Ascending aorta (tissue), 2 donors: ENCODE measurements at regions of chr11 and their contacts with region 1.

Region 1: GRCh38 chr11:75547580-75548058 is 14.4 kb upstream of the SERPINH1 start:
- DNase-seq: peak in 1 of 2 donors; percentile 86
- H3K4me3 ChIP-seq: no peak overlapping the region
- H3K27ac ChIP-seq: no peak overlapping the region
- H3K4me1 ChIP-seq: peaks cover 0 to 6% of the 10 kb centered on the region in 2 donors
- H3K27me3 ChIP-seq: no peaks in the 10 kb centered on the region
- CTCF ChIP-seq: peak; percentile 85 to 92 (median 91)

Region 2: GRCh38 chr11:75562048-75562835 is 14.6 kb after region 1 on chr11 and contains the start of gene SERPINH1:
- intact Hi-C with region 1: loop called (anchors 1 kb)
- DNase-seq: peak; percentile 66 to 94
- H3K4me3 ChIP-seq: peak within 1 kb of the TSS; percentile 80 to 93
- H3K27ac ChIP-seq: peak within 1 kb of the TSS; percentile 99 to 100
- H3K4me1 ChIP-seq: peaks cover 31 to 71% of the 10 kb centered on the region in 2 donors
- H3K27me3 ChIP-seq: no peaks in the 10 kb centered on the region
- CTCF ChIP-seq: no peak
- total RNA-seq, gene SERPINH1: 1,290 TPM

Region 3: GRCh38 chr11:75574698-75575602 is 27.3 kb after region 1 on chr11:
- intact Hi-C with region 1: loop called (anchors 1 kb)
- DNase-seq: no peak
- H3K4me3 ChIP-seq: no peak overlapping the region
- H3K27ac ChIP-seq: peak overlapping the region in 1 of 2 donors; percentile 24
- H3K4me1 ChIP-seq: peaks cover 0 to 3% of the 10 kb centered on the region in 2 donors
- H3K27me3 ChIP-seq: no peaks in the 10 kb centered on the region
- CTCF ChIP-seq: peak in 2 of 3 experiments; percentile 18 to 32

Region 4: GRCh38 chr11:75667831-75668450 is 120.3 kb after region 1 on chr11:
- intact Hi-C with region 1: loop called (anchors 5 kb)
- DNase-seq: peak in 1 of 2 donors; percentile 68
- H3K4me3 ChIP-seq: peak overlapping the region; percentile 66 to 74
- H3K27ac ChIP-seq: peak overlapping the region; percentile 48 to 54
- H3K4me1 ChIP-seq: peaks cover 0 to 14% of the 10 kb centered on the region in 2 donors
- H3K27me3 ChIP-seq: no peaks in the 10 kb centered on the region
- CTCF ChIP-seq: no peak

Region 5: GRCh38 chr11:75768112-75768908 is 220.7 kb after region 1 on chr11 and contains the start of gene DGAT2:
- intact Hi-C with region 1: loop called (anchors 10 kb)
- DNase-seq: peak in 1 of 2 donors; percentile 81
- H3K4me3 ChIP-seq: peak within 1 kb of the TSS; percentile 66 to 69
- H3K27ac ChIP-seq: peak within 1 kb of the TSS in 1 of 2 donors; percentile 31
- H3K4me1 ChIP-seq: peaks cover 9 to 13% of the 10 kb centered on the region in 2 donors
- H3K27me3 ChIP-seq: no peaks in the 10 kb centered on the region
- CTCF ChIP-seq: peak; percentile 7 to 47 (median 30)
- total RNA-seq, gene DGAT2: 26.2 TPM